A673 (cell line): ENCODE measurements at regions of chr13 and their contacts with region 1.

Region 1: DNA sequence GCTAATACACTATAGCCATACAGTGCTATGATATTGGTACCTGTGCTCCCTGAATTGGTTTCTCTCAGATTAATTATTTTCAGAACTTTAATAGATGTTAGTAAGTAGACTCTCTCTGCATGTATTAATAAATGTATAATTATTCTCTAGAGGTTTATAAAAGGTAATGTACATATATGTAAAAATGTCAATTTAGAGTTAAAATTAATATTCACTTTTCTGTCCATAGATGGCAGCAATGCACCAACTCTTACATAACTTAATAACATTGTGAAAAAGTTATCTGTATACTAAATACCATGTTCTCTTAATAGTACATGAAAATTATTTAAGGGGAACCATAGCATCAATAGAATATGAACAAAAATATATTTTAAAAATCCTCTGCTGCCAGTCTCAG is 515.0 kb upstream of the KLHL1 start:
- DNase-seq: peak; percentile 10
- H3K4me3 ChIP-seq: no peak overlapping the region
- H3K27ac ChIP-seq: no peak overlapping the region
- H3K4me1 ChIP-seq: no peaks in the 10 kb centered on the region
- H3K27me3 ChIP-seq: peaks cover 2% of the 10 kb centered on the region
- CTCF ChIP-seq: peak; percentile 61

Region 2: GRCh38 chr13:70960841-70961443 is 337.7 kb after region 1 on chr13:
- CTCF ChIA-PET with region 1: no interaction called
- POLR2A ChIA-PET with region 1: no interaction called
- intact Hi-C with region 1: loop called (anchors 5 kb)
- DNase-seq: peak; percentile 44
- H3K4me3 ChIP-seq: no peak overlapping the region
- H3K27ac ChIP-seq: no peak overlapping the region
- H3K4me1 ChIP-seq: no peaks in the 10 kb centered on the region
- H3K27me3 ChIP-seq: peaks cover 22% of the 10 kb centered on the region
- CTCF ChIP-seq: peak; percentile 80